ENCODE measurements at regions of chr20 and their contacts with region 1.

Region 1: GRCh38 chr20:45696605-45697173 is 5.1 kb upstream of the WFDC13 start:
- DNase-seq: no peak
- H3K4me3 Mint-ChIP-seq: no peak overlapping the region
- H3K27ac Mint-ChIP-seq: no peak overlapping the region
- H3K4me1 Mint-ChIP-seq: peaks cover 1% of the 10 kb centered on the region
- H3K27me3 Mint-ChIP-seq: peaks cover 46% of the 10 kb centered on the region
- CTCF ChIP-seq: no peak

Region 2: DNA sequence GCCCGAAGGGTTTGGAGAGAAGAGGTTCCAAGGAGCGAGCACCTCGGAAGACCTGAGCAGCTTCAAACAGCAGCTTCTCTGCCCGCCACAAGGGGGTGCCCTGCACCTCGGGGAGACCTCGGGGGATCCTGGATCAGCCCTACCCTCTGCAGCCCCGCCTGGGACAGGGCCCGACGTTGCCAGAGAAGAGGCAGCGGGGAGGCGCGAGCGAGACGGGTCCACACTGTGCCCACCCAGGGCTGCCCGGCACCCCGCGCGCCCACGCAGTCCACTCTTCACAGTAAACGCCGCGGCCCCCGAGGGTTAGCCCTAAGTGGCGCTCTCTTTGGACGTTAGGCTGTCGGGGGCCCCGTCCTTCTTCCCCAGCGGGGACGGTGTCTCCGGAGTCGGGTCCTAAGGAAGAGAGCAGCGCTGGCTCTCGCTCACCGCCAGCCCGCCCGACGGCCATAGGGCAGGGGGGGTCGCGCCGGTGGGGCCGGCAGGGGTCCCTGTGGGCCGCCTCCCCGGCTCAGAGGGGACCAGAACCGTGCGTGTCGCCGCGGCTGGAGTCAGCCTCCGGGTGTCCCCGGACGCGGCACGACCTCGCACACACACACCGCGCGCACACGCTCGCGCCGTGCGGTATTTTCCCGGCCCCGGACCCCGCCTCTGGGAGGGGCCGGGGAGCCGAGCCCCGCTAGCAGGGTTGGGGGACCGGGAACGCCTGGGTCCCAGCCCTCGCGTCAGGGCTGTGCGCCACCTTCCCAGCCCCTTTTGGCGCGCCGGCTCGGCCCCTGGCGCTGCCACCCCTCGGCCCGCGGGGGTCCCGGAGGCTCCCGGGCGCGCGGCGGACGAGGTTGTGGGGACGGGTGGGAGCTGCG is 610.7 kb after region 1 on chr20:
- CTCF ChIA-PET with region 1: no interaction called
- intact Hi-C with region 1: no loop called
- DNase-seq: peak; percentile 85
- H3K4me3 Mint-ChIP-seq: no peak overlapping the region
- H3K27ac Mint-ChIP-seq: no peak overlapping the region
- H3K4me1 Mint-ChIP-seq: no peaks in the 10 kb centered on the region
- H3K27me3 Mint-ChIP-seq: peaks cover 88% of the 10 kb centered on the region
- CTCF ChIP-seq: peak; percentile 97

Region 3: DNA sequence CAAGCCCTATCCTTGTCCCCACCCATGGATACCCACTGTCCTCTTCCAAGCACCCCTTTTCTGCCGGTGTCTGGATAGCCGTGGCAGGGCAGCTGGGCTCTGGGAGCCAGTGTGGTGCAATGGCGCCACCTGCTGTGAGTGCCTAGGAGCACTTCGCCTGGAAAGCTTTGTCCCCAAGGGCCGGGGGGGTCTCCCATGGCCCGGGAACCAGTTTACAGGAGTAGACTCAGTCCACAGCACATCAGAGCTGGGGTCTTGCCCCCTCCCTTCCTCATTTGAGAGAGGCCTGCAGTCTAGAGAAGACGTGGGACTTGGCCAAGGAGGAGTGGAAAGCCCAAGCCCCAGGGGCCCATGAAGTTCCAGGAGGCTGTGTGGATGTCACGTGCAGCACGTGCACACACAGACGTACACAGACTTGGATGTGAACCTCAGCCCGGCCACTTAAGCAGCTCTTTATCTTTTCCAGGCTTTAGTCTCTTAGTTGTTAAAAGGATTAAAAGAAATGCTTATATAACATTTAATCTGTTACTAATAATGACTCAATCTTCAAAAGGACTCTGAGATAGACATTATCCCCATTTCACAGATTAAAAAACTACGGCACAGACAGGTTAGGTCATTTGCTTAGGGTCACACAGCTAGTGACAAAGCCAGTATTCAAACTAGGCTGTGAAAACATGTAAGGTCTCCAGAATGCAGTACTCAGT is 652.5 kb after region 1 on chr20:
- CTCF ChIA-PET with region 1: interaction called, 12 read pairs
- intact Hi-C with region 1: no loop called
- DNase-seq: peak; percentile 74
- H3K4me3 Mint-ChIP-seq: no peak overlapping the region
- H3K27ac Mint-ChIP-seq: no peak overlapping the region
- H3K4me1 Mint-ChIP-seq: peaks cover 13% of the 10 kb centered on the region
- H3K27me3 Mint-ChIP-seq: peaks cover 14% of the 10 kb centered on the region
- CTCF ChIP-seq: peak; percentile 90

Measured in Calu3 (cell line).